Pancreas (tissue), 10 donors: ENCODE measurements at regions of chr20 and their contacts with region 1.

Region 1: DNA sequence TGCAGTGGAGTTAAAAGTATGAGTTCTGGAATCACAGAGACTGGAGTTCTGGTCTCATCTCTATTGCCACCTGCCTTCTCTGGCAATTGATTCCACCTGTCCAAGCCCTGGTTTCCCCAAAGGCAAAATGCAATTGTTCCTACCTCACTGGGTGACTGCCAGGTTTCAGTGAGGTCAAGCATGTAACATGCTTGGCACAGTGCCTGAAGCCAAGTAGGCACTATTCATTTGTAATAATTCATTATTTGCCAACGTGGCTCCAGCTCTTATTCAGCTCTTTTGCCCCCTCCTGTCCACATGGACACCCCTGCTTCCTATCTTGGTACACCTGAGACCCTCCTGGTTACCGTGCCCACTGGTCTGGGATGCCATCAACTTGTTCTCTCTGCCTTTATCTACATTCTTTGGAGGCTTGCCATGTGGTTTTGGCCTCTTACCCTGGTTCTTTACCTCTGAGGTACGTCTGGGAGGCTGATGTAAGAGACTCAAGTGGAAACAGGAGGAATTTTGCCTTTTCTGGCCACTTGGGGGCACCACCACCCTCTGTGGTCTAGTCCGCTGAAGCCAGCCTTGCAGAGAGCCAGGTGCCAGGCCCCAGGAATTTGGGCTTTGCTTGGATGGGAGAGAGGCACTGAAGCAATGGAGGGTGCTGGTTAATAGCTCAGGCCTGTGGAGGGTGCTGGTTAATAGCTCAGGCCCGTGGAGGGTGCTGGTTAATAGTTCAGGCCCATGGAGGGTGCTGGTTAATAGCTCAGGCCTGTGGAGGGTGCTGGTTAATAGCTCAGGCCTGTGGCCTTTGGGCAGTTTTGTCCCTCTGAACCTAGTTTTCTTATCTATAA is 1.7 kb downstream of the KCNK15 start:
- DNase-seq: peak; percentile 64 to 92 (median 82)
- ATAC-seq: peak; percentile 74 to 84 (median 82)
- H3K4me3 ChIP-seq: no peak overlapping the region
- H3K27ac ChIP-seq: peak overlapping the region; percentile 3 to 74 (median 31)
- H3K4me1 ChIP-seq: peaks cover 0 to 16% (median 0%) of the 10 kb centered on the region in 3 donors
- H3K27me3 ChIP-seq: no peaks in the 10 kb centered on the region
- CTCF ChIP-seq: peak; percentile 35 to 59 (median 46)

Region 2: GRCh38 chr20:44692932-44693476 is 54.4 kb before region 1 on chr20:
- intact Hi-C with region 1: no loop called
- DNase-seq: peak in 3 of 6 donors; percentile 19 to 39 (median 34)
- ATAC-seq: peak in 3 of 4 donors; percentile 73 to 76 (median 75)
- H3K4me3 ChIP-seq: no peak overlapping the region
- H3K27ac ChIP-seq: no peak overlapping the region
- H3K4me1 ChIP-seq: peaks cover 0 to 3% (median 0%) of the 10 kb centered on the region in 3 donors
- H3K27me3 ChIP-seq: no peaks in the 10 kb centered on the region
- CTCF ChIP-seq: no peak

Region 3: DNA sequence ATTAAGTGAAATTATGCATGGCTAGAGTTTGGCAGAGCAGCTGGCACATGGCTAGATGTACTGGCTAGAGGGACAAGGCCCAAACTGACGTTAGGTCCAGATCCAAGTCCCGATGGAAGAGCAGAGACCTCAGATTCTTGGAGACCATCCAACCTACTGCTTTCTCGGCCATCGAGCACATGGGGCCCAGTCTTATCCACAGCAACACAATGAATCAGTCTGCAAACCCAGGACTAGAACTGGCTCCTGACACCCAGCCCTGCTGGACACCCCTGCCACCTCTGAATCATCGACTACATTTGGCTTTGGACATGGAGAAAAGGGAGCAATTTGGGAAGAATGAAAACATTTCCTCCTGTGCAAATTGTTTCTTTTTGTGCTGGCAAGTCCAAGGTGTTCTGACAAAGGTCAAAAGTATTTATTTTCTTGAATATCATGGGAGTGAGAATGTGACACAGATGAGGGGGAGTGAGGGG is 114.2 kb after region 1 on chr20:
- intact Hi-C with region 1: loop called in 2 of 3 experiments (anchors 5 kb)
- DNase-seq: peak in 1 of 6 donors; percentile 35
- ATAC-seq: peak; percentile 61 to 72 (median 66)
- H3K4me3 ChIP-seq: no peak overlapping the region
- H3K27ac ChIP-seq: peak overlapping the region in 1 of 4 donors; percentile 8
- H3K4me1 ChIP-seq: peaks cover 14 to 15% (median 14%) of the 10 kb centered on the region in 3 donors
- H3K27me3 ChIP-seq: no peaks in the 10 kb centered on the region
- CTCF ChIP-seq: no peak

Region 4: DNA sequence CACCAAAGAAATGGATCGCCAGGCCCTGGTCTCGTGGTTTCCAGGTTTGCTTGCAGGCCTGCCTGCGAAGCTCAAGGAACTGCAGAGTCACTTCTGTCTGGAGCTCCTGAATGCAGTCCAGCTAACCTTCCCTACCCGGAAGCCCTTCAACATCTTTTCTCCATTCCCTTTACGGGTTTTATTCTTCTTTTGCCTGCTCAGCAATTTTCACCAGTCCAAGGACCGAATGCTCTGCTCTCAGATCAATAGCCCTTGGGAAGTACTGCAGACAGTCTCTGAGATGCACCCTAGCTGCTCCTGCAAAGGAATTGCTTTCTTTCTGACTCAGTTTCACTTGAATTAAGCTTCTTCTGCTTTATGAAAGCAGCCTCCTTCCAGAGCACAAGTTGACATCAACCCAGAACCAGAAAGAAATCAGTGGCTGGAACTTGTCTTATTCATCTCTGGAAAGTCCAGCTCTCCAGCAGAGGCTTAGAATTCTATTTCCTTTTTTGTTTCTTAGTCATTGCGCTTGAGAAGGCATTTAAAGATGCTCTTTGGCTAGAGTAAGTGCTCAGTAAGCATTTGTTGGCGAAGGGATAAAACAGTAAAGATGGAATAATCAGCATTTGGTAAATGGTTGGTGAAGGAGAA is 119.4 kb after region 1 on chr20:
- intact Hi-C with region 1: loop called in 2 of 3 experiments (anchors 5 kb)
- DNase-seq: no peak
- ATAC-seq: no peak
- H3K4me3 ChIP-seq: no peak overlapping the region
- H3K27ac ChIP-seq: no peak overlapping the region
- H3K4me1 ChIP-seq: peaks cover 12 to 14% (median 14%) of the 10 kb centered on the region in 3 donors
- H3K27me3 ChIP-seq: no peaks in the 10 kb centered on the region
- CTCF ChIP-seq: no peak